MCF 10A (cell line): ENCODE measurements at regions of chr1 and their contacts with region 1.

Region 1: GRCh38 chr1:214698559-214698958 is 95.6 kb downstream of the CENPF start:
- DNase-seq: no peak
- H3K4me3 Mint-ChIP-seq: no peak overlapping the region
- H3K27ac Mint-ChIP-seq: no peak overlapping the region
- H3K4me1 Mint-ChIP-seq: no peaks in the 10 kb centered on the region
- H3K27me3 Mint-ChIP-seq: no peaks in the 10 kb centered on the region
- CTCF ChIP-seq: no peak

Region 2: GRCh38 chr1:215376544-215377264 is 678.1 kb after region 1 on chr1:
- CTCF ChIA-PET with region 1: no interaction called
- POLR2A ChIA-PET with region 1: no interaction called
- intact Hi-C with region 1: loop called (anchors 10 kb)
- DNase-seq: peak; percentile 56
- H3K4me3 Mint-ChIP-seq: no peak overlapping the region
- H3K27ac Mint-ChIP-seq: no peak overlapping the region
- H3K4me1 Mint-ChIP-seq: peaks cover 8% of the 10 kb centered on the region
- H3K27me3 Mint-ChIP-seq: no peaks in the 10 kb centered on the region
- CTCF ChIP-seq: no peak